ENCODE measurements at regions of chr14 and their contacts with region 1.

Region 1: DNA sequence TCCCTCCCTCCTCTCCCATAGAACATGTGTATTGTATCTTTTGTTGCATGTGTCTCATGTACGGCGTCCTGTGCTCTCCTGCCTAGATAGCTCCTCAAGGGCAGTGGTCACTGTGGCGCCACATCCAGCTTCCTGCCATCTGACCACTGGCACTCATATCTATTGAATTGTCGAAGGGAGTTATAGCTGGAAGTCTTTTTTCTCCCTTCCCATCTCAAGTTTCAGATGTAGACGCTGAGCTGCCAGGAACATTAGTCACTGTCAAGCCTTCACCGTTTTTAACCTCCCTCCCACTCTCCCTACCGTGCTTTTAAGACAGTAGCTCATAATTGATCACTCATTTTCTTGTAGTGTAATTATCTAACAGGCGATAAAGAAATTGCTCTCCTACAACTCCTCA is 33.0 kb downstream of the MTHFD1 start:
- DNase-seq: no peak
- ATAC-seq: no peak
- H3K4me3 ChIP-seq: no peak overlapping the region
- H3K4me3 Mint-ChIP-seq: no peak overlapping the region
- H3K27ac ChIP-seq: no peak overlapping the region
- H3K27ac Mint-ChIP-seq: no peak overlapping the region
- H3K4me1 ChIP-seq: no peaks in the 10 kb centered on the region
- H3K4me1 Mint-ChIP-seq: no peaks in the 10 kb centered on the region
- H3K27me3 ChIP-seq: no peaks in the 10 kb centered on the region
- H3K27me3 Mint-ChIP-seq: no peaks in the 10 kb centered on the region
- CTCF ChIP-seq: no peak

Region 2: GRCh38 chr14:64410084-64410774 is 10.9 kb before region 1 on chr14:
- CTCF ChIA-PET with region 1: no interaction called
- POLR2A ChIA-PET with region 1: no interaction called
- intact Hi-C with region 1: no loop called
- DNase-seq: no peak
- ATAC-seq: no peak
- H3K4me3 ChIP-seq: no peak overlapping the region
- H3K4me3 Mint-ChIP-seq: no peak overlapping the region
- H3K27ac ChIP-seq: peak overlapping the region in 1 of 2 donors; percentile 64
- H3K27ac Mint-ChIP-seq: peak overlapping the region; percentile 46
- H3K4me1 ChIP-seq: peaks cover 5 to 8% of the 10 kb centered on the region in 2 donors
- H3K4me1 Mint-ChIP-seq: peaks cover 18% of the 10 kb centered on the region
- H3K27me3 ChIP-seq: no peaks in the 10 kb centered on the region
- H3K27me3 Mint-ChIP-seq: no peaks in the 10 kb centered on the region
- CTCF ChIP-seq: no peak

Region 3: GRCh38 chr14:64447876-64448670 is 26.9 kb after region 1 on chr14:
- CTCF ChIA-PET with region 1: no interaction called
- POLR2A ChIA-PET with region 1: no interaction called
- intact Hi-C with region 1: no loop called
- DNase-seq: no peak
- ATAC-seq: no peak
- H3K4me3 ChIP-seq: no peak overlapping the region
- H3K4me3 Mint-ChIP-seq: no peak overlapping the region
- H3K27ac ChIP-seq: peak overlapping the region in 1 of 2 donors; percentile 54
- H3K27ac Mint-ChIP-seq: peak overlapping the region; percentile 76
- H3K4me1 ChIP-seq: peaks cover 31 to 49% of the 10 kb centered on the region in 2 donors
- H3K4me1 Mint-ChIP-seq: peaks cover 57% of the 10 kb centered on the region
- H3K27me3 ChIP-seq: no peaks in the 10 kb centered on the region
- H3K27me3 Mint-ChIP-seq: no peaks in the 10 kb centered on the region
- CTCF ChIP-seq: no peak

Region 4: DNA sequence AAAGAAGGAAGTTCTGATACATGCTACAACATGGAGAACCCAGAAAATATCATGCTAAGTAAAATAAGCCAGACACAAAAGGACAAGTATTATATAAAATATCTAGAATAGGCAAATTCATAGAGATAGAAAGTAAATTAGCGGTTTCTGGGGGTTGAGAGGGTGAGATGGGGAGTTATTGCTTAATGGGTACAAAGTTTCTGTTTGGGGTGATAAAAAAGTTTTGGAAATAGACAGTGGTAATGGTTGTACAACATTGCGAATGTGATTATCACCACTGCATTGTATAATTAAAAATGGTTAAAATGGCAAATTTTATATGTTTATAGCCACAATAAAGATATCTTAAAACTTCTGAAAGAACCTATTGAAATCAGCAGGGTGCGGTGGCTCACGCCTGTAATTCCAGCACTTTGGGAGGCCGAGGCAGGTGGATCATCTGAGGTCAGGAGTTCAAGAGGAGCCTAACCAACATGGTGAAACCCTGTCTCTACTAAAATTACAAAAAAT is 67.5 kb after region 1 on chr14:
- CTCF ChIA-PET with region 1: interaction called, 60 read pairs
- POLR2A ChIA-PET with region 1: no interaction called
- intact Hi-C with region 1: no loop called
- DNase-seq: no peak
- ATAC-seq: no peak
- H3K4me3 ChIP-seq: no peak overlapping the region
- H3K4me3 Mint-ChIP-seq: no peak overlapping the region
- H3K27ac ChIP-seq: no peak overlapping the region
- H3K27ac Mint-ChIP-seq: no peak overlapping the region
- H3K4me1 ChIP-seq: no peaks in the 10 kb centered on the region
- H3K4me1 Mint-ChIP-seq: peaks cover 6% of the 10 kb centered on the region
- H3K27me3 ChIP-seq: no peaks in the 10 kb centered on the region
- H3K27me3 Mint-ChIP-seq: no peaks in the 10 kb centered on the region
- CTCF ChIP-seq: no peak

Measured in B cell (primary cell).